PC-9 (cell line): ENCODE measurements at regions of chr5 and their contacts with region 1.

Region 1: DNA sequence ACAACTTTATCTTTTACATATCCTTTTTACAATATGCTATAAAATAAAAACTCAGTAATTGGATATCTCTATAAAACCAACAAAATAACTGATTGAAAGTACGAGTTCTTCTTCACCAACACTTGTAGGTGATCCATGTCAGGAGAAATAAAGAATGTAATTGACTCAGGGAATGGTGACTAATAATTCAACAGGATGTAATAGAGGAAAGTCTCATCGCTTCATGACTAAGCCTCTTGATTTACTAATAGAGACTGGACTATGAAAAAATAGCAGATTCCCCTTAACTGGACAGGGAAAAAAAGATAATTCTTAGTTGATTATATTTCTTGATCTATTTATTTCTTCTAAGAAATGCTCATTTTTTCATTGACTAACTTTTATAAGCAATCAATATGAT is 507.7 kb upstream of the PTGER4 start:
- DNase-seq: peak in 1 of 2 experiments; percentile 56
- H3K4me3 ChIP-seq: no peak overlapping the region
- H3K27ac ChIP-seq: peak overlapping the region; percentile 46; the same call in 1 of the 2 replicates
- H3K4me1 ChIP-seq: peaks cover 16% of the 10 kb centered on the region
- H3K27me3 ChIP-seq: no peaks in the 10 kb centered on the region
- CTCF ChIP-seq: no peak

Region 2: GRCh38 chr5:38739007-38739743 is 1432.8 kb before region 1 on chr5:
- CTCF ChIA-PET with region 1: no interaction called
- POLR2A ChIA-PET with region 1: no interaction called
- intact Hi-C with region 1: no loop called
- DNase-seq: peak in 1 of 2 experiments; percentile 23
- H3K4me3 ChIP-seq: no peak overlapping the region
- H3K27ac ChIP-seq: no peak overlapping the region
- H3K4me1 ChIP-seq: no peaks in the 10 kb centered on the region
- H3K27me3 ChIP-seq: no peaks in the 10 kb centered on the region
- CTCF ChIP-seq: no peak

Region 3: DNA sequence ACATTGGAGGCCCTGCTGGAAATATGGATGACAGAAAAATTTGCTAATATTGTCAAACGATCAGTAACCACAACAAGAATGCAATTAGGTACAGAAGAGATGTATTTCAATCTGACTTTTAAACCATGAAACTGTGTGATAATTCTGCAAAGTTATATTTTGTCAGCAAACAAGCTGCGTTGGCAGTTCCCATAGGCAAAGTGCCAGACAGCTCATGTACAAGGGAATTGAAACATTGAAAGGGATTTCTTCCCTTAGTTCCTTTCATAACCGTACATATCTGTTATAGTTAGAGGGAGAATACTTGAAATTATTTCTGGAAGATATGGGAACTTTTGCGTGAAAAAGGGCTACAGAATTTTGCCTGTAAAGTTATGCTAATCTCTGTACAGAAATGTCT is 88.4 kb after region 1 on chr5:
- CTCF ChIA-PET with region 1: no interaction called
- POLR2A ChIA-PET with region 1: interaction called, 11 read pairs
- intact Hi-C with region 1: no loop called
- DNase-seq: no peak
- H3K4me3 ChIP-seq: no peak overlapping the region
- H3K27ac ChIP-seq: no peak overlapping the region
- H3K4me1 ChIP-seq: no peaks in the 10 kb centered on the region
- H3K27me3 ChIP-seq: no peaks in the 10 kb centered on the region
- CTCF ChIP-seq: no peak

Region 4: GRCh38 chr5:40347981-40348725 is 176.2 kb after region 1 on chr5:
- CTCF ChIA-PET with region 1: no interaction called
- POLR2A ChIA-PET with region 1: interaction called, 17 read pairs
- intact Hi-C with region 1: no loop called
- DNase-seq: no peak
- H3K4me3 ChIP-seq: no peak overlapping the region
- H3K27ac ChIP-seq: no peak overlapping the region
- H3K4me1 ChIP-seq: no peaks in the 10 kb centered on the region
- H3K27me3 ChIP-seq: no peaks in the 10 kb centered on the region
- CTCF ChIP-seq: no peak